Transverse colon (tissue), 4 donors: ENCODE measurements at regions of chr11 and their contacts with region 1.

Region 1: DNA sequence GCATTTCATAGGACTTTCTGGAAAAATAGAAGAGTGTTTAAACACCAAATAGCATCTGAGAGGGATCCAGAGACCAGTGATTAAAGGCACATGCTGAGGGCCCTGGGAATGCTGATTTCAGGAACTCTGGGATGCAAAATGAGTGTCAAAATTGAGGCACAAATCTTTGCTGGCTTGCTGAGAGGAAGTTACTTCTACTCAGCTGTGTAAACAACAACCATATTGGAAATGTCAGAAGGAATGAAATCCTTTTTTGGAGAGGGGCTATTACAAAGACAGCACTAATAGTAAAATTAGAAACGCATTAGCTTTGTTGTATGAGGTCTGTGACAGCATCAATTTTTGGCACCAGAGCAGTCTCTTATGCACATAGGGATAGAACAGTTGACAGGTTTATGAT is 267.8 kb upstream of the RAG2 start:
- DNase-seq: no peak
- H3K4me3 ChIP-seq: no peak overlapping the region
- H3K27ac ChIP-seq: no peak overlapping the region
- H3K4me1 ChIP-seq: no peaks in the 10 kb centered on the region
- H3K27me3 ChIP-seq: no peaks in the 10 kb centered on the region
- CTCF ChIP-seq: no peak
- EP300 ChIP-seq: no peak
- POLR2A ChIP-seq: no peak

Region 2: GRCh38 chr11:36885154-36885553 is 19.3 kb after region 1 on chr11:
- in situ Hi-C with region 1: no loop called
- intact Hi-C with region 1: loop called (anchors 1 kb)
- DNase-seq: no peak
- H3K4me3 ChIP-seq: no peak overlapping the region
- H3K27ac ChIP-seq: no peak overlapping the region
- H3K4me1 ChIP-seq: no peaks in the 10 kb centered on the region
- H3K27me3 ChIP-seq: no peaks in the 10 kb centered on the region
- CTCF ChIP-seq: no peak
- EP300 ChIP-seq: no peak
- POLR2A ChIP-seq: no peak